Endothelial cell of umbilical vein (primary cell): ENCODE measurements at regions of chr3 and their contacts with region 1.

Region 1: GRCh38 chr3:69628951-69629350 is 110.3 kb upstream of the MITF start:
- DNase-seq: no peak
- H3K4me3 ChIP-seq: no peak overlapping the region
- H3K27ac ChIP-seq: no peak overlapping the region
- H3K4me1 ChIP-seq: no peaks in the 10 kb centered on the region
- H3K27me3 ChIP-seq: no peaks in the 10 kb centered on the region
- CTCF ChIP-seq: no peak
- POLR2A ChIP-seq: no peak

Region 2: GRCh38 chr3:69511361-69511760 is 117.6 kb before region 1 on chr3:
- CTCF ChIA-PET with region 1: no interaction called
- POLR2A ChIA-PET with region 1: no interaction called
- dilution Hi-C with region 1: no loop called
- intact Hi-C with region 1: no loop called
- DNase-seq: no peak
- H3K4me3 ChIP-seq: no peak overlapping the region
- H3K27ac ChIP-seq: no peak overlapping the region
- H3K4me1 ChIP-seq: no peaks in the 10 kb centered on the region
- H3K27me3 ChIP-seq: peaks cover 12 to 15% of the 10 kb centered on the region in 2 experiments
- CTCF ChIP-seq: no peak
- POLR2A ChIP-seq: no peak

Region 3: GRCh38 chr3:69568458-69568857 is 60.5 kb before region 1 on chr3:
- CTCF ChIA-PET with region 1: no interaction called
- POLR2A ChIA-PET with region 1: no interaction called
- dilution Hi-C with region 1: no loop called
- intact Hi-C with region 1: loop called (anchors 2 kb)
- DNase-seq: no peak
- H3K4me3 ChIP-seq: no peak overlapping the region
- H3K27ac ChIP-seq: no peak overlapping the region
- H3K4me1 ChIP-seq: no peaks in the 10 kb centered on the region
- H3K27me3 ChIP-seq: peaks cover 5% of the 10 kb centered on the region in 2 experiments
- CTCF ChIP-seq: no peak
- POLR2A ChIP-seq: no peak